PC-9 (cell line): ENCODE measurements at regions of chr5 and their contacts with region 1.

Region 1: DNA sequence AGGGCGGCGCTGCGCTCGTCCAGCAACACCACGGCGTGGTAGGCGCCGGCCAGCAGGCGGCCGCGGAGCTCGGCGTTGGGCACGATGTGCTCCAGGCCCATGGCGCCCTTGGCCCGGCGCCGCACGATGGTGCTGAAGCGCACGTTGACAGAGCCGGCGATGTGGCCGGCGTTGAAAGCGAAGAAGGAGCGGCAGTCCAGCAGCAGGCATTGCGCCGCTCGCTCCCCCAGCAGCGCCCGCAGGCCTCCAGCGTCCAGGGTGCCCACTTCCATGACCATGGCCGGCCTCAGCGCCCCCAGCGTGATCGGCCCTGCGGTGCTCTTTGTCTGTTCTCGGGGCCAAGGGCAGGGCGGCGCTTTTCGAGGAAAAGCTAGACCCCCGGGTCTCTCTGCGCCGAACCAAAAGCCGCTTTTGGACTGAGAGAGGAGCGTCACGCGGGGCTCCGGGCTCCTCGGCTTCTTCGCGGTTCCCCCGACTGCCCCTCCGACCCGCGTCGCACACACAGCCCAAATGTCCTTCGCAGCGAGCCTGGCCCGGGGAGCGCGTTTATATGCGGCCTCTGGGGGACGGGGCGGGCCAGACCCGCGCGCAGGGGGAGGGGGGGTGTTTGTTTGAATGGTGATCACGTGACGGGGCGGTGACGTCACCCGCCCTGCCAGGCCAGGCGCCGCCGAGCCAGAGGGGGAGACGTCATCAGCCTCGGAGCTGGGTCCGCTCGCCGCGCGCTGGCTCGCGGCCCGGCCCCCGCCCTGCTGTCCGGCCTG is at the start of gene DUSP1:
- DNase-seq: peak; percentile 84 to 98
- H3K4me3 ChIP-seq: peak within 1 kb of the TSS; percentile 91
- H3K27ac ChIP-seq: peak within 1 kb of the TSS; percentile 93
- H3K4me1 ChIP-seq: peaks cover 61% of the 10 kb centered on the region
- H3K27me3 ChIP-seq: no peaks in the 10 kb centered on the region
- CTCF ChIP-seq: peak; percentile 50; the same call in 1 of the 2 replicates
- total RNA-seq, gene DUSP1: 10.3 and 18.4 TPM in 2 replicates

Region 2: GRCh38 chr5:172412724-172413286 is 358.1 kb before region 1 on chr5:
- CTCF ChIA-PET with region 1: interaction called, 10 read pairs
- POLR2A ChIA-PET with region 1: no interaction called
- intact Hi-C with region 1: no loop called
- DNase-seq: peak; percentile 75 to 80
- H3K4me3 ChIP-seq: no peak overlapping the region
- H3K27ac ChIP-seq: peak overlapping the region; percentile 64
- H3K4me1 ChIP-seq: peaks cover 69% of the 10 kb centered on the region
- H3K27me3 ChIP-seq: no peaks in the 10 kb centered on the region
- CTCF ChIP-seq: no peak

Region 3: DNA sequence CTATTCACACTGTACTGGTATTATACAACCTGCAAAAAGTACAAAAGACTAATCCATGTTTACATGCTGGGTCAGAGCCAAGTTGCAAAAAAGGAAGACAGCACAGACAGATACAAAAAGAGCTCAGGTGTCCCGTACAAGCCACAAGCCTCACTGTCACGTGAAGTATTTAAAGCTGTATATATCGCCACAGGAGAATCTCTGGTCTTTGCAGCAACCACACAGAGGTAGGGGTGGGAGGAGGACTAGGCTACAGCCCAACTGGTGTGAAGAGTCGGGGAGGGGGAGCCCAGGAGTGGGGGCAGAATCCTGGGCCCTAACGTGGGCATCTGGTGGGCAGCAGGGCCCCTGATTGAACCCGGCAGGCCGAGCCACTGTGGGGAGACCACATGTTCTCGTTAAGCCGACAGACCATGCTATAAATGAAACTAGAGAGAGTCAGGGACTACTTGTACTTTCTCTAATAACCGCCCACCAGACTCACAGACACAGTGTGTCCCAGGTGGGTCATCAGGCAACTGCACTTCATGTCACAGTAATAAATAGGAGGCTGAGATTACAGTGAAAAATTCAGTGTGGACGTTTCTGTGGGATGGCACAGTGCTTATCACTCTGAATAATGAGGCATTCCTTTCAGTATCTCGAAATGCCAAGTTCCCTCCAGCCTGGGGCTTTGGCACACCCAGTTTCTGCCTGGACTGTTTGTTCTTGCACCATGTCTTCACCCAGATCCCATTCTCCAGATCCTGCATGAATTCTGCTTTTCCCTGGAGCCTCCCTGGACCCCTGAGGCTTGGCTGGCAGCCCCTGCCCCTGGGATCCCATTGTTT is 237.2 kb before region 1 on chr5:
- CTCF ChIA-PET with region 1: no interaction called
- POLR2A ChIA-PET with region 1: no interaction called
- intact Hi-C with region 1: no loop called
- DNase-seq: no peak
- H3K4me3 ChIP-seq: no peak overlapping the region
- H3K27ac ChIP-seq: no peak overlapping the region
- H3K4me1 ChIP-seq: no peaks in the 10 kb centered on the region; the same call in 1 of the 2 replicates
- H3K27me3 ChIP-seq: peaks cover 15% of the 10 kb centered on the region
- CTCF ChIP-seq: no peak

Region 4: DNA sequence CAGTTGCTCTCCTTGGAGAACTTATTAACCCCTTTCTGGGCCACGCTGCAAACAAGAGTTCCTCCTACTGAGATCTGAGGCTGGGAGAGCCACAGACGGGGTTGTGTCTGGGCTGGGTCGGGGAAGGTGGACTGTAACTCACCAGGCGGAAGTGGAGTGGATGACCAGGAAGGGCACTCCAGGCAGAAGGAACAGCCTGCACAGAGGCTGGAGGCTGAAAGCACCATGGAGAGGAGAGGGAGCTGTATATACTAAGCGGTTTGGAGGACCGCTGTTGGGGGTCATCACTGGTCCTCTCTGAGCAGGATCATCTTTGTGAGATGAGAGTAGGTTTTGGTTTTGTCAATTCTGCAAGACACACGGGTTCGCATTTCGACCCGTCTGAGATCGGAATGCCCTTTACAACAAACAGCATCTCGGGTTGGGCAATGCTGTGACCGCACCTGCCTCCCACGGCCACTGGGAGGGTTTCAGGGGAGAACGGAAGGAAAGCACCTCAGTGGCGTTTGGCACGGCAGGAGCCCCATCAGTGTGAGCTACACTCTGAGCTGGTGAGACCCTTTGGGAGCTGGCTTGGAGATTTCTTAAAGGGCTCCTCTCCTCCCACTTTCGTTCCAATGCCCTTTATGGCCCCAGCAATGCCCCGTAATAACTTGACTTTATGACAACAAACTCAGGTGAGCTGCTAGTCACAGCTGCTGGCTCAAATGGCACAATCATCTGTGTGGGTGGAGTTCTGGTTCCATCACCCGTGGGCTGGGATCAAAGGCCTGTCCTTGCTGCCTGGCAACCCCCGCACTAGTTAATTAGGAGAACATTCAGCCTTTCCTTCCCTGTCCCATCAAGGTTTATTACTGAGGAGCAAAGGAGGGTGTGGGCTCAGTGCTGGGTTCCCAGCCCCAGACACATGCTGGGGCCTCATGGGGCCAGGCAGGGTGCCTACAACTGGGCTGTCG is 148.5 kb before region 1 on chr5:
- CTCF ChIA-PET with region 1: no interaction called
- POLR2A ChIA-PET with region 1: no interaction called
- intact Hi-C with region 1: no loop called
- DNase-seq: no peak
- H3K4me3 ChIP-seq: no peak overlapping the region
- H3K27ac ChIP-seq: no peak overlapping the region
- H3K4me1 ChIP-seq: no peaks in the 10 kb centered on the region
- H3K27me3 ChIP-seq: peaks cover 26% of the 10 kb centered on the region
- CTCF ChIP-seq: no peak

Region 5: DNA sequence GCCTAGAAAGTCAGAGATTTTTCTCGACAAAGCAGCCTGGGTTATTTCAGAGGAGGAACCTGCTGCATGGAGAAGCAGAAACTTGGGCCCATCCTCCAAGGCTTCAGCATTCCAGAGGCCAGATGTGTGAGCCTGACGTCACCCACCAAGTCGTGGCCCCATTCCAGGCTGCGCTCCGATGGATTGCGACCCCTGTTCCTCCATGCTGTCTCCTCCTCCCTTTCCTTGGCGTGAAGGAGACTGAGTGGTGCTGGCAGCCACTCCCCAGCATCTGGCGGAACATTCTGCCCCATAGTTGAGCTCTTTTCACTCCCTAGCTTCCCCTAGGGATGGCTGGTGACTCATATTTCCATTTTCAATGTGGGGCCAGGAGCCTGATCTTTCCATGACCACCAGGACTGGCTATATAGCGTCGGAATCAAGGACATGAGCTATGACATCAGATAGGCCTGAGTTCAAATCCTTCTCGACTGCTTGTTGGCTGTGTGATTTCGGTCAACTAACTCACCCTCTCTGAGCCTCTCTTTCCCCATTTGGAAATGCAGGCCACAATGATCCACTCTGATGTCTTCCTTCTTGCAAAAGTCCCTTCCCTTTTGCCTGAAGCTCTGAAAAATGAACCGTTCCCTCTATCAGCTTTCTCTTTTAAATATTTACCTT is 24.6 kb after region 1 on chr5:
- CTCF ChIA-PET with region 1: no interaction called
- POLR2A ChIA-PET with region 1: interaction called, 20 read pairs
- intact Hi-C with region 1: no loop called
- DNase-seq: no peak
- H3K4me3 ChIP-seq: no peak overlapping the region
- H3K27ac ChIP-seq: no peak overlapping the region
- H3K4me1 ChIP-seq: peaks cover 46% of the 10 kb centered on the region
- H3K27me3 ChIP-seq: no peaks in the 10 kb centered on the region
- CTCF ChIP-seq: no peak

Region 6: GRCh38 chr5:172833686-172834414 is 63.0 kb after region 1 on chr5 and contains the start of gene ERGIC1:
- CTCF ChIA-PET with region 1: interaction called, 3 read pairs
- POLR2A ChIA-PET with region 1: no interaction called
- intact Hi-C with region 1: loop called (anchors 1 kb)
- DNase-seq: peak; percentile 64 to 88
- H3K4me3 ChIP-seq: peak within 1 kb of the TSS; percentile 85
- H3K27ac ChIP-seq: peak within 1 kb of the TSS; percentile 63
- H3K4me1 ChIP-seq: peaks cover 20% of the 10 kb centered on the region
- H3K27me3 ChIP-seq: no peaks in the 10 kb centered on the region
- CTCF ChIP-seq: no peak
- total RNA-seq, gene ERGIC1: 106 and 159 TPM in 2 replicates

Region 7: GRCh38 chr5:172932313-172933017 is 161.6 kb after region 1 on chr5:
- CTCF ChIA-PET with region 1: interaction called, 3 read pairs
- POLR2A ChIA-PET with region 1: no interaction called
- intact Hi-C with region 1: loop called (anchors 1 kb)
- DNase-seq: peak in 1 of 2 experiments; percentile 70
- H3K4me3 ChIP-seq: no peak overlapping the region
- H3K27ac ChIP-seq: no peak overlapping the region
- H3K4me1 ChIP-seq: peaks cover 22% of the 10 kb centered on the region
- H3K27me3 ChIP-seq: no peaks in the 10 kb centered on the region
- CTCF ChIP-seq: peak; percentile 85

Region 8: GRCh38 chr5:173172166-173172565 is 401.3 kb after region 1 on chr5:
- CTCF ChIA-PET with region 1: no interaction called
- POLR2A ChIA-PET with region 1: no interaction called
- intact Hi-C with region 1: no loop called
- DNase-seq: no peak
- H3K4me3 ChIP-seq: no peak overlapping the region
- H3K27ac ChIP-seq: no peak overlapping the region
- H3K4me1 ChIP-seq: no peaks in the 10 kb centered on the region
- H3K27me3 ChIP-seq: no peaks in the 10 kb centered on the region
- CTCF ChIP-seq: no peak

Region 9: GRCh38 chr5:173283318-173284288 is 512.7 kb after region 1 on chr5:
- CTCF ChIA-PET with region 1: no interaction called
- POLR2A ChIA-PET with region 1: no interaction called
- intact Hi-C with region 1: no loop called
- DNase-seq: peak; percentile 49 to 85
- H3K4me3 ChIP-seq: peak overlapping the region; percentile 40; the same call in 1 of the 2 replicates
- H3K27ac ChIP-seq: no peak overlapping the region
- H3K4me1 ChIP-seq: 0 out of 2 replicates have a peak, but pooled peaks cover 5% of the 10 kb centered on the region
- H3K27me3 ChIP-seq: 0 out of 2 replicates have a peak, but pooled peaks cover 9% of the 10 kb centered on the region
- CTCF ChIP-seq: peak; percentile 69